Gastrocnemius medialis (tissue), 4 donors: ENCODE measurements at regions of chr16 and their contacts with region 1.

Region 1: DNA sequence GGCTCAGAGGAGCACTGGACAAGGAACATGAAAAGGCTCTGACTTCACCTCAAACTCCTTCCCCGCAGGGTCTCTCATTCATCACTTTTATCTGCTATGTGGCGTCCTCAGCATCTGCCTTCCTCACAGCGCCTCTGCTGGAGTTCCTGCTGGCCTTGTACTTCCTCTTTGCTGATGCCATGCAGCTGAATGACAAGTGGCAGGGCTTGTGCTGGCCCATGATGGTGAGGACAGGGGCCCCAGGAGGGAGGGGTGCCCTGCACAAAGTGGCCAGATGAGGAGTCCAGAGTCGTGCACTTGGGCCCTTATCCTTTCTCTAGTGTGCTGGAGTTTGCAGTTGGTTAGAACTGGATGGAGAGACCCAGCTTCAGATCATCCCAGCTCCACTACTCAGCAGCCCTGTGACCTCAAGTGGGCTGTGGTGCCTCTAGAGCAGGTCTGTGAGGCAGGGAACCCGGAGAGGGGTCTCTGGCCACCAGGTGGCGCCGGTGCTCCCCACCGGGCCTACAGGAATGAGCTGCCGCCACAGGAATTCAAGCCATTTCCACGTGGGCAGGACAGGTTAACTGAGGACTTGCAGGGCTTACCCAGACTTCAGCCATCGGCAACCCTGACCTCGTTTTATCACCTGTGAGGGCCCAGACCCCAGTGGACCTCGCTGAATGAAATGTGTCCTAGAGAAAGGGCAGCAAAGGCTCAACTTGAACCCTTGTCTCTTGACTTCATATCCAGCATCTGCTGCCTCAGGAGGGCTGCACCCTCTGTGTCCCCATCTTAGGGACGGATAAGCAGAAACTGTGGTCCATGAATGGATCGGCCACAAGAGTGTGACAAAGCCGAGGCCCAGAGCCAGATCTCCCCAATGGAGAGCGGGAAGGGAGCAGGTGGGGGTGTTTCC is 4.0 kb downstream of the CMTM3 start:
- DNase-seq: peak; percentile 73 to 85
- ATAC-seq: peak; percentile 83 to 87
- H3K4me3 ChIP-seq: no peak overlapping the region
- H3K27ac ChIP-seq: peak overlapping the region in 2 of 4 donors; percentile 10 to 23
- H3K4me1 ChIP-seq: peaks cover 11 to 14% of the 10 kb centered on the region in 2 donors
- H3K27me3 ChIP-seq: peaks cover 0 to 20% (median 11%) of the 10 kb centered on the region in 3 donors
- CTCF ChIP-seq: peak; percentile 67 to 94 (median 87)
- POLR2A ChIP-seq: no peak

Region 2: GRCh38 chr16:66406534-66407221 is 201.8 kb before region 1 on chr16:
- in situ Hi-C with region 1: loop called in 2 of 4 experiments (anchors 10 kb)
- intact Hi-C with region 1: loop called (anchors 2 kb)
- DNase-seq: peak; percentile 54 to 67
- ATAC-seq: peak; percentile 86
- H3K4me3 ChIP-seq: peak overlapping the region; percentile 50 to 62 (median 53)
- H3K27ac ChIP-seq: peak overlapping the region in 1 of 4 donors; percentile 7
- H3K4me1 ChIP-seq: peaks cover 3 to 6% of the 10 kb centered on the region in 2 donors
- H3K27me3 ChIP-seq: no peaks in the 10 kb centered on the region
- CTCF ChIP-seq: peak; percentile 80 to 94 (median 89)
- POLR2A ChIP-seq: no peak

Region 3: GRCh38 chr16:66650707-66651473 is 42.4 kb after region 1 on chr16:
- in situ Hi-C with region 1: no loop called
- intact Hi-C with region 1: loop called (anchors 5 kb)
- DNase-seq: peak; percentile 52 to 58
- ATAC-seq: peak; percentile 91 to 97
- H3K4me3 ChIP-seq: no peak overlapping the region
- H3K27ac ChIP-seq: no peak overlapping the region
- H3K4me1 ChIP-seq: peaks cover 3 to 12% of the 10 kb centered on the region in 2 donors
- H3K27me3 ChIP-seq: no peaks in the 10 kb centered on the region
- CTCF ChIP-seq: peak; percentile 62 to 93 (median 74)
- POLR2A ChIP-seq: no peak

Region 4: GRCh38 chr16:66696669-66697630 is 88.5 kb after region 1 on chr16 and contains the start of gene CMTM4:
- in situ Hi-C with region 1: no loop called
- intact Hi-C with region 1: loop called (anchors 5 kb)
- DNase-seq: peak; percentile 75 to 85
- ATAC-seq: peak; percentile 93
- H3K4me3 ChIP-seq: peak within 1 kb of the TSS; percentile 68 to 88 (median 81)
- H3K27ac ChIP-seq: peak within 1 kb of the TSS; percentile 65 to 81 (median 77)
- H3K4me1 ChIP-seq: peaks cover 8 to 14% of the 10 kb centered on the region in 2 donors
- H3K27me3 ChIP-seq: no peaks in the 10 kb centered on the region
- CTCF ChIP-seq: peak in 2 of 5 experiments; percentile 30 to 45
- POLR2A ChIP-seq: peak in 1 of 2 donors; percentile 21
- total RNA-seq, gene CMTM4: 5.7 to 15.0 (median 7.2) TPM

Region 5: GRCh38 chr16:66751303-66751991 is 143.0 kb after region 1 on chr16 and contains the start of gene DYNC1LI2:
- in situ Hi-C with region 1: no loop called
- intact Hi-C with region 1: loop called (anchors 1 kb)
- DNase-seq: peak; percentile 57 to 66
- ATAC-seq: peak; percentile 96 to 97
- H3K4me3 ChIP-seq: peak within 1 kb of the TSS; percentile 74 to 98 (median 91)
- H3K27ac ChIP-seq: peak within 1 kb of the TSS; percentile 78 to 96 (median 92)
- H3K4me1 ChIP-seq: peaks cover 15 to 25% of the 10 kb centered on the region in 2 donors
- H3K27me3 ChIP-seq: no peaks in the 10 kb centered on the region
- CTCF ChIP-seq: peak; percentile 73 to 99 (median 97)
- POLR2A ChIP-seq: peak in 1 of 2 donors; percentile 37
- total RNA-seq, gene DYNC1LI2: 57.4 to 80.3 (median 62.6) TPM

Region 6: DNA sequence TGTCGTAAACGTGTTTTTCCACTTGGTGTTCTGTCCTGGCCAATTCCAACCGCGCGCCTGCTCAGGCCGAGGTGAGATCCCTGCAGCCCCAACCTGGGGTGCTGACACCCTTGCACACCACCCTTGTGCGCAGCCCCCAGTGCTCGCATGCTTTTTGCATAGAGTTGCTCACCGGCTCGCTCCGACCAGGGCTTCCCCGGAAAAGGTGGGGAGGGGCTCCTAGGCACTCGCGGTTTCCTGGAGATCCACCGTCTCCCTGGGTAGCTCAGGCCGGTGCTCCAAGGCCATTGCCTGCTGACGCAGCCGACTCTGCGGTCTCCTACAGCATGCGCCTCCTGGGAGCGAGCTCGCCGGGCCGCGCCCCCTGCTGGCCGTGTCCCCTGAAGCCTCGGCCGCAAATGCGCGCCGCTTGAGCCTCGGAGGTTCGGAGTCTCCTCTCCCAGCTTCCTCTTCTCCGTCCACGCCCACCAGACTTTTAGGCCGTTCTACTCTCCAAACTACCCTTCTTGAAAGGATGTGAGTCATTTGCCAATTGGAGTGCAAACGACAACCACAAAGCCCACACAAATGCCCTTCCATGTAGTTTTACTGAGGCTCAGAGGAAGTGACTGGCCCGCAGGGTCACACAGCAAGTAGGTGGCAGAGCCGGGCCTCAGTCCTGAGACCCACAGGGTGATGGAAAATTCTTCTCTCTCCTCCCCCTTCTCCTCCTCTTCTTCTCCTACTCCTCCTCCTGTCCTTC is 264.6 kb after region 1 on chr16:
- in situ Hi-C with region 1: loop called in 1 of 4 experiments (anchors 25 kb)
- intact Hi-C with region 1: no loop called
- DNase-seq: peak; percentile 70 to 80
- ATAC-seq: peak; percentile 85 to 91
- H3K4me3 ChIP-seq: peak overlapping the region; percentile 30 to 55 (median 40)
- H3K27ac ChIP-seq: peak overlapping the region in 2 of 4 donors; percentile 35 to 57
- H3K4me1 ChIP-seq: peaks cover 0 to 6% of the 10 kb centered on the region in 2 donors
- H3K27me3 ChIP-seq: no peaks in the 10 kb centered on the region
- CTCF ChIP-seq: peak; percentile 62 to 94 (median 90)
- POLR2A ChIP-seq: no peak

Region 7: DNA sequence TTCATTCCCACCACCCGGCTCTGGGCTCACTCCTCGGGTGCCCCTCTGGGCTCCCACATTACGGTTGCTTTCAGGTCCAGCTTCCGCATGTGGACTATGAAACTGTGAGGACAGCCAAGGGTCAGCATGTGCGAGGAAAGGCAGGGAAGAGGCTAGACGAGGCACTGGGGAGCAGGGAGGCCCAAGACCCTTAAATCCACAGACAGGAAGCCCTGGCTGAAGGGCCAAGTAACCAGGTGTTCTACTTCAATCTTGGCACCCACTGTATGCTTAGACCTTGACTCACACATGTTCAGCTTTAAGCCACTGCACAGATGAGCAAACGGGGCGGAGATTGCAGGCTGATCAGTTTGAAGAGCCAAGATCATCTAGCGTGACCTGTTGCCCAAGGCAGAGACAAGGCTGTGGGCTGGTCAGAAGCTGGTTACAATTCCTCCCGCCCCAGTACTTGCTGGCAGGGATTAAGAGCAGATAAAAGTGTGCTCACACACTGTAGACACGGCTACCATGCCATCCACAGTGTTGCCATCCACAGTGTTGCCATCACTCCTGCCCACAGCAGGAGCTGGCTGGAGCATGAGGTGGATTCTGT is 379.8 kb after region 1 on chr16 and contains the start of gene CES4A:
- in situ Hi-C with region 1: no loop called
- intact Hi-C with region 1: no loop called
- DNase-seq: peak; percentile 74 to 81
- ATAC-seq: peak; percentile 86 to 94
- H3K4me3 ChIP-seq: peak within 1 kb of the TSS in 1 of 4 donors; percentile 19
- H3K27ac ChIP-seq: peak within 1 kb of the TSS; percentile 61 to 81 (median 69)
- H3K4me1 ChIP-seq: no peaks in the 10 kb centered on the region
- H3K27me3 ChIP-seq: no peaks in the 10 kb centered on the region
- CTCF ChIP-seq: no peak
- POLR2A ChIP-seq: peak in 1 of 2 donors; percentile 62
- total RNA-seq, gene CES4A: 12.0 to 82.7 (median 17.4) TPM

Region 8: DNA sequence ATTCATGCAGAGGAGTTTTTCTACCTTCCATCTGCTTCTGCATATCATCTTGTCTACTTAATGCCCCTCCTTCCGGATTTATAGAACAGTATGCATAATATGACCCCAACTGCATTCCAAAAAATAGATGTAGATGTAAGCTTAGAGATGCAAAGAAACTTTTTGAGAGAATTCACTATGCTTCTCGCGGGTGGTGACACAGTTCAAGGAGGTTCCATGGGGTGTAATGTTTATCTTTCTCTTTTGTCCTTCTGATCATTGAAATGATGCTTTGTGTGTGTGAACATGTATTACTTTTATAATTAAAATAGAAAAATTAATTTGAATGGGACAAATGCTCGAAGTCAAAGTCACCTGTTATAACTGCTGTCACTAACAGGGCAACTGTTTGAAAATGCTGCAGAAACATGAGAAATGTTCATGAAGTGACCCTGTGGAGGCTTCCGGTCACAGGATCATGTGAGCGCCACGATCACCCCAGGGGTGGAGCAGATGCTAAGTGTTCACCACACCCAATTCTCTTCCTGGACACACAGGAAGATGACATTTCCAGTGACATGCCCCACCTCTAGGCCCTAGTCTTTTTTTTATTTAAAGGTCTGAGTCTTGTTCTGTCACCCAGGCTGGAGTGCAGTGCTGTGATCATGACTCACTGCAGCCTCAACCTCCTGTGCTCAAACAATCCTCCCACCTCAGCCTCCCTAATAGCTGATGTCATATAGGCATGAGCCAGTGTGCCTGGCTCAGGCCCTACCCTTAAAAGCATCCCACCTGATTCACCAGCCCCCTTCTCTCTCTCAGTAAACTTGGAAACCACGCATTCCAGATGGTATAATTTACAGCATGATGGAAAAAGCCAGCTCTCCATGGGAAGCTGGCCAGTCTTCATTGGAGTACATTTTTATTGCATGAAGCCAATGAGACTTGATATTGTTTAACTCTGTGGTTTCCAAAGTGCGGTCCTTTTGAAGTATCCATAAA is 895.8 kb after region 1 on chr16:
- in situ Hi-C with region 1: no loop called
- intact Hi-C with region 1: no loop called
- DNase-seq: peak in 1 of 2 donors; percentile 62
- ATAC-seq: peak; percentile 61 to 66
- H3K4me3 ChIP-seq: no peak overlapping the region
- H3K27ac ChIP-seq: peak overlapping the region; percentile 49 to 69 (median 54)
- H3K4me1 ChIP-seq: peaks cover 0 to 4% of the 10 kb centered on the region in 2 donors
- H3K27me3 ChIP-seq: no peaks in the 10 kb centered on the region
- CTCF ChIP-seq: no peak
- POLR2A ChIP-seq: no peak